T-cell (primary cell): ENCODE measurements at regions of chr1 and their contacts with region 1.

Region 1: DNA sequence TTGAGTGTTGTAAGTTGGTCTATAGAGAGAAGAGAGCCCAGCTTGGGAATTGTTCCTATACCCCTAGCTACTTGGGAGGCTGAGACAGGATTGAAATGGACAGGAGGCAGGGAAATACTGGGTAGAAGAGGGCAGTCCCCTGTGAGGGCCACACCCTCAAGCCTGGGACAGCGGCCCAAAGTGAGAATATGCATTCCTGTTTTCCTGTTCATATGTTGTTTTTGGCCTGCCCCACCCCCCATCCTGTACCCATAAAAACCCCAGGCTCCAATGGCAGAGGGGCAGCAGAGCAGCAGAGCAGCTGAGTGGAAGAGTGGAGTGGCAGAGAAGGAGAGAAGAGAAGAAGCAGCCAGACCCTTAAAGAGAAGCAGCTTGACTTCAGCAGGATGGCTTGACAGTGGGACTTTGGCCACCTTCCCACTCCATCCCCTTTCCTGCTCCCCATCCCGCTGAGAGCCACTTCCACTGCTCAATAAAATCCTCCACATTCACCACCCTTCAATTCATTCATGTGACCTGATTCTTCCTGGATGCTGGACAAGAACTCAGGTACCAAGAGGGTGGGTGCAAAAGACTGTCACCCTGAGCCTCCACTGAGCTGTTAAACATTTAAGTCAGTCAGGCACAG is 70.6 kb upstream of the PUM1 start:
- DNase-seq: no peak
- ATAC-seq: no peak
- H3K4me3 ChIP-seq: no peak overlapping the region
- H3K4me3 Mint-ChIP-seq: no peak overlapping the region
- H3K27ac ChIP-seq: no peak overlapping the region
- H3K27ac Mint-ChIP-seq: no peak overlapping the region
- H3K4me1 ChIP-seq: no peaks in the 10 kb centered on the region
- H3K4me1 Mint-ChIP-seq: no peaks in the 10 kb centered on the region
- H3K27me3 ChIP-seq: no peaks in the 10 kb centered on the region
- H3K27me3 Mint-ChIP-seq: no peaks in the 10 kb centered on the region

Region 2: GRCh38 chr1:31227891-31228568 is 91.9 kb after region 1 on chr1:
- CTCF ChIA-PET with region 1: no interaction called
- POLR2A ChIA-PET with region 1: interaction called in 1 of 2 experiments, 10 read pairs
- DNase-seq: no peak
- ATAC-seq: no peak
- H3K4me3 ChIP-seq: no peak overlapping the region
- H3K4me3 Mint-ChIP-seq: no peak overlapping the region
- H3K27ac ChIP-seq: no peak overlapping the region
- H3K27ac Mint-ChIP-seq: no peak overlapping the region
- H3K4me1 ChIP-seq: no peaks in the 10 kb centered on the region
- H3K4me1 Mint-ChIP-seq: no peaks in the 10 kb centered on the region
- H3K27me3 ChIP-seq: peaks cover 0 to 10% of the 10 kb centered on the region in 2 experiments
- H3K27me3 Mint-ChIP-seq: peaks cover 3 to 13% of the 10 kb centered on the region in 2 donors